ENCODE measurements at regions of chr18 and their contacts with region 1.

Region 1: GRCh38 chr18:9943311-9943710 is 29.5 kb downstream of the VAPA start:
- DNase-seq: no peak
- ATAC-seq: no peak

Region 2: DNA sequence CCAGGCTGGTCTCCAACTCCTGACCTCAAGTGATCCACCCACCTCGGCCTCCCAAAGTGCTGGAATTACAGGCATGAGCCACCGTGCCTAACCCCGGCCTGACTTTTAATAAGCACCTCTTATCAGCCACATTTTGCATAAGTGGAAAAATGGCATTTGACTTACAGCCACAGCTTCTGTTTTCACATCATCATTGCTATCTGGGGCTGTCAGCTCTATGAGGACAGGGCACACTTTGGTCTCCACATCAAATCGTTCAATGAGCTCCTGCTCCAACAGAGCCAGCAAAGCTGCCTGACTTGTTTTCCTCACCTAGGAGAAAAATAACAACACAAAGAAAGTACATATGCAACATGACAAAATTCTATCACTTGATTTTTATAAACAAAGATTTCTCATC is 355.4 kb before region 1 on chr18:
- intact Hi-C with region 1: loop called in 1 of 2 experiments (anchors 10 kb)
- DNase-seq: no peak
- ATAC-seq: no peak